Activated CD4-positive, alpha-beta memory T cell treated with anti-CD3 and anti-CD28 coated beads for 36 hours (primary cell): ENCODE measurements at regions of chr11 and their contacts with region 1.

Region 1: DNA sequence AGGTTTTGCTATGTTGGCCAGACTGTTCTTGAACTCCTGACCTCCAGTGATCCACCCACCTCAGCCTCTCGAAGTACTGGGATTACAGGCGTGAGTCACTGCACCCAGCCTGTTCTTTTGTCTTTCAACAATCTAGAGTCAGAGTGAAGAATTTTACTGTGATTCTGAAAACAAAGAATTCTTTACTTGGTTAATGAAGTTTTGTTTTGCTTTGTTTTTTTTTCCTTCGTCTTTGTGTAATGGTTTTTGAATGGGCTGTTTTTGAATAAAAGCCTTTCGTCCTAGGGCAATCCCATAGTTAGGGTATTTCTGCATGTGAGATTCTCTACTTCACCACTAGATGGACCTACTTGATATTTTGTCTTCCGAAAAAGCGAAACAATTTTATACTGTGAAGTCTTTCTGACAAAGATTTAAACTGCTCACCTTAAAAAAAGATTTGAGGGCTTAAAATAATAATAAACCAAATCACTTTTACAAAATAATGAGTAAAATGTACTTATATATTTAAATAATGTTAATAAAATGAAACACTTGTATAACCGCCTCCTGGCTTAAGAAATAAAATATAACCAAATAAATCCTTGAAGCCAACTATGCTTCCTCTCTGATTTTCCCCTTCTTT is 43.4 kb upstream of the SC5D start:
- DNase-seq: peak; percentile 62
- H3K4me3 Mint-ChIP-seq: no peak overlapping the region
- H3K27ac Mint-ChIP-seq: peak overlapping the region; percentile 25
- H3K4me1 Mint-ChIP-seq: peaks cover 2% of the 10 kb centered on the region
- H3K27me3 Mint-ChIP-seq: peaks cover 6% of the 10 kb centered on the region

Region 2: DNA sequence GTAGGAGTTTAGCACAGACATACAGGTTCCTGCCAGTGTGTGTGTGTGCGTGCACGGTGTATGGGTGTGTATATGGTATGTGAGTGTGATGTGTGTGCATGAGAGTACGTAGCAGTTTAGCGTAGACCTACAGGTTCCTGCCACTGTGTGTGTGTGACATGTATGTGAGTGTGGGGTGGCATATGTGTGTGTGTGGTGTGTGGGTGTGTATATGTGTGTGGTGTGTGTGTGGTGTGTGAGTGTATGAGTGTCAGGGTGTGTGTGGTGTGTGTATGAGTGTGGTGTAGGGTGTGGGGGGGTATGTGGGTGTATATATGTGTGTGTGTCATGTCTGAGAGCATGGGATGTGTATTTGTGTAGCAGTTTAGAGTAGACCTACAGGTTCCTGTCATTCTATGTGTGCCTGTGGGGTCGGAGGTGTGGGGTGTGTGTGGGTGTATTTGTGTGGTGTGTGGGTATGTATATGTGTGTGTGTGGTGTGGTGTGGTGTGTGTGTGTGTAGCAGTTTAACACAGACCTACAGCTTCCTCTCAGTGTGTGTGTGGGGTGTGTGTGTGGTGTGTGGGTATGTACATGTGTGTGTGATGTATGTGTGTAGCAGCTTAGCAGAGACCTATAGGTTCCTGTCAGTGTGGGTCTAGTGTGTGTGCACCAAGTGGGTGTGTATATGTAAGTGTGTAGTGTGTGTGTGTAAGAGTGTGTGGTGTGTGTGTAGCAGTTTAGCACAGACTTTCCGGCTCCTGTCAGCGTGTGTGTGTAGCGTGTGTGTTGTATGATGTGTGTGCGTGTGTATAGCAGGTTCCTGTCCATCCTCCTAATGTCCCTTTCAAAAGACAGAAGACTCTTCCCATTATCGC is 257.1 kb before region 1 on chr11:
- CTCF ChIA-PET with region 1: no interaction called
- POLR2A ChIA-PET with region 1: no interaction called
- intact Hi-C with region 1: no loop called
- DNase-seq: no peak
- H3K4me3 Mint-ChIP-seq: no peak overlapping the region
- H3K27ac Mint-ChIP-seq: no peak overlapping the region
- H3K4me1 Mint-ChIP-seq: no peaks in the 10 kb centered on the region
- H3K27me3 Mint-ChIP-seq: peaks cover 2% of the 10 kb centered on the region

Region 3: GRCh38 chr11:121352251-121352891 is 103.2 kb after region 1 on chr11:
- CTCF ChIA-PET with region 1: no interaction called
- POLR2A ChIA-PET with region 1: no interaction called
- intact Hi-C with region 1: no loop called
- DNase-seq: no peak
- H3K4me3 Mint-ChIP-seq: no peak overlapping the region
- H3K27ac Mint-ChIP-seq: no peak overlapping the region
- H3K4me1 Mint-ChIP-seq: no peaks in the 10 kb centered on the region
- H3K27me3 Mint-ChIP-seq: no peaks in the 10 kb centered on the region

Region 4: GRCh38 chr11:121591405-121592033 is 342.4 kb after region 1 on chr11:
- CTCF ChIA-PET with region 1: interaction called, 13 read pairs
- POLR2A ChIA-PET with region 1: no interaction called
- intact Hi-C with region 1: loop called (anchors 1 kb)
- DNase-seq: peak; percentile 76
- H3K4me3 Mint-ChIP-seq: no peak overlapping the region
- H3K27ac Mint-ChIP-seq: peak overlapping the region; percentile 52
- H3K4me1 Mint-ChIP-seq: peaks cover 25% of the 10 kb centered on the region
- H3K27me3 Mint-ChIP-seq: no peaks in the 10 kb centered on the region

Region 5: DNA sequence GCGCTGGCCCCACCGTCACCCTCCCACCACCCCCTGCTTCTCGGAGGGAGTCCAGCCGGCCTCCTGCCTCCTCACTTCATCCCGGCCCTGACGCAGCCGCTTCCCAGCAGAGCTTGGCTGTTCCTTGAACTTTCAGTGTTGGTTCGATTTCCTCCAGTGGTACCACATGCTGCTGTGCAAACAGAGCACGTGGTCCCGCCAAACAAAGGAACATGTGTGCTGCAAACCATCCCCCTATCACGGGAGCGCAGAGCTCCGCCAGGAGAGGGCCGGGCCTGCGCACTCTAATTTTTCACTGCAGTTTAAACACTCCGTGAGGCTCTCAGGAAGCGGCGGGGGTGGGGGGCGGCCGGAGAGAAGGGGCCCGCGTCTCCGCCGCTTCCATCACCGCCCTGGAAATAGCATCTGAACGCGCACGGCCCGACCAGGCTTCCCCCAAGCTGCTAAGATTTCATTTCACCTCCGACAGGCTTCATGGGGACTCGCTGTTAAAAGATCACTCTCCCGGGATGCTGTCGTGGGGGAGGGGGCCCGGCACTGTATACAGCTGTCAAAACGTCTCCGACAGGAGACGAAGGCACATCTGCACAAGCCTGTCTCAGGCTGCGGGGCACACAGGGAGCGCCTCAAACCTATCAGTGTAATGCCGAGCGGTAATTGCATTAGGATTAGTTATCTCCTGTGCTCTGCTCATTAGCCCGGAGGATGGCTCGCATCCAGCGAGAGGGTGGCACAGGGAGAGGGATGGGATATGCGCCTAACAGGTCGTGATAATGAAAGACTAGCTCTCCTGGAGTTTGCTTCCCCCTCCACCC is 473.5 kb after region 1 on chr11:
- CTCF ChIA-PET with region 1: no interaction called
- POLR2A ChIA-PET with region 1: no interaction called
- intact Hi-C with region 1: no loop called
- DNase-seq: peak; percentile 9
- H3K4me3 Mint-ChIP-seq: no peak overlapping the region
- H3K27ac Mint-ChIP-seq: no peak overlapping the region
- H3K4me1 Mint-ChIP-seq: peaks cover 3% of the 10 kb centered on the region
- H3K27me3 Mint-ChIP-seq: peaks cover 8% of the 10 kb centered on the region